Calu3 (cell line): ENCODE measurements at regions of chr19 and their contacts with region 1.

Region 1: DNA sequence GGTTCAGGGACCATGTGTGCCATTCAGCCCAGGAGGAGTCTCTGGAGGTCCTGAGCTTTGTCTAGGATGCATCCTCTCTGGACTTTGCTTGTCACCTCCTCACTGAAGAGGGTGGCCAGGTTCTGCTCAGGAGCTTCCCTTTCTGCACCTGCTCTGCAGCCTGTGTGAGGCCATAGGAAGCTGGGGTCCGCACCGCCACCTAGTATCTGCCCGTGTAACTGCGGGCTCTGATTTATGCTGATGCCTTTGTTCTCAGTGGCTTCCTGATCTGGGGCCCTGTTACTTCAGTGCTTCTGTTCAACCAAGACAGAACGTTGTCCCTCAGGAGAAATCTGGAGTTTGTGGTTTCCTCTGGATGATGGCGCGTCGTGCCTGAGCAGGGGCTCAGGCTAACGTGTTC is 15.5 kb downstream of the ZNF610 start:
- DNase-seq: no peak
- H3K4me3 Mint-ChIP-seq: no peak overlapping the region
- H3K27ac Mint-ChIP-seq: no peak overlapping the region
- H3K4me1 Mint-ChIP-seq: no peaks in the 10 kb centered on the region
- H3K27me3 Mint-ChIP-seq: no peaks in the 10 kb centered on the region
- CTCF ChIP-seq: no peak

Region 2: DNA sequence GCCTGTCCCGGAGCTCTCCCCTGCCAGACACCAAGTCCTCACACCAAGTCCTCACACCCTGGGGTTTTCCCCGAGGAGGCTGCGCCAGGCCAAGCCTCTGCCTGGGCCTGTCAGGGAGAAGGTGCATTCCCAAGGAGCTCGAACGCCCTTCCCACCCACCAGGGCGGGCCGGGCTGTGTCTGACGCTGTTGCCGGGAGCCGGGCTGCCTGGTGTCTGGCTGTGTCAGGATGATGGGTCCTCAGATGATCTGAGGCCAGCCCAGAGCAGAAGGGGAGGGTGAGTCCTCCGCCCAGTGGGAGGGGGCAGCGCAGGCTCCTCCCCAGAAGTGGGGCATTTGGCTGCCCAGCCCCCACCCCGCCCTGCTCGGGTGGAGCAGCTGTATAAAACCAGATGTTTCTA is 625.5 kb before region 1 on chr19:
- CTCF ChIA-PET with region 1: interaction called, 12 read pairs
- intact Hi-C with region 1: no loop called
- DNase-seq: no peak
- H3K4me3 Mint-ChIP-seq: no peak overlapping the region
- H3K27ac Mint-ChIP-seq: no peak overlapping the region
- H3K4me1 Mint-ChIP-seq: no peaks in the 10 kb centered on the region
- H3K27me3 Mint-ChIP-seq: peaks cover 53% of the 10 kb centered on the region
- CTCF ChIP-seq: no peak

Region 3: DNA sequence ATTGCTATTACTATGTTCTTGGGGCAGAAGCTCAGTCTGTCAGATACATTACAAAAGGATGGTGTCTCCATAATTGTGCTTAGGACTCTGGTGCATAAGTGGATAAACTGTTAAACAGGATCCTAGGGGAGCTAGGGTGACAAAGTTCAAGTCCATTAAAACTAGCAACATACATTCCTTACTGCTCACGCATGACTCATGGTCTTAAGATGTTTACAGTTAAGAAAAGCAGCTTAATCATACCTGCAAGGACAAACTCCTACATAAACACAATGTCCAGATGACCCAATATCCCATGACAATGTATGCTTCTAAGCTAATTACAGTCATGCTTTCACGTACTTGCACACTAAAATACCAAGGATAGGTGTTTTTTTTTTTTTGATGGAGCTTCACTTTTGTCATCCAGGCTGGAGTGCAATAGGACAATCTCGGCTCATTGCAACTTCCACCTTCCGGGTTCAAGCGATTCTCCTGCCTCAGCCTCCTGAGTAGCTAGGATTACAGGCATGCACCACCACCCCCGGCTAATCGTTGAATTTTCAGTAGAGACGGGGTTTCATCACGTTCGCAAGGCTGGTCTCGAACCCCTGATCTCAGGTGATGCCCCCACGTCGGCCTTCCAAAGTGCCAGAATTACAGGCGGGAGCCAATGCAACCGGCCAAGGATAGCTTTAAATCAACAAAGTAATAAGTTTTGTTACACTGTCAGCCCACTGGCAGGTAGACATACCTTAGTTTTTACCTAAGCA is 215.3 kb after region 1 on chr19:
- CTCF ChIA-PET with region 1: no interaction called
- intact Hi-C with region 1: no loop called
- DNase-seq: no peak
- H3K4me3 Mint-ChIP-seq: no peak overlapping the region
- H3K27ac Mint-ChIP-seq: no peak overlapping the region
- H3K4me1 Mint-ChIP-seq: no peaks in the 10 kb centered on the region
- H3K27me3 Mint-ChIP-seq: no peaks in the 10 kb centered on the region
- CTCF ChIP-seq: no peak